ENCODE measurements at regions of chr1 and their contacts with region 1.

Region 1: GRCh38 chr1:234114648-234115307 is 210.3 kb downstream of the SLC35F3 start:
- DNase-seq: peak; percentile 21
- ATAC-seq: peak; percentile 72
- H3K4me3 ChIP-seq: no peak overlapping the region
- H3K27ac ChIP-seq: no peak overlapping the region
- H3K4me1 ChIP-seq: 0 out of 4 replicates have a peak, but pooled peaks cover 0 to 4% of the 10 kb centered on the region in 2 experiments
- H3K27me3 ChIP-seq: no peaks in the 10 kb centered on the region
- CTCF ChIP-seq: peak; percentile 57 to 78 (median 61); a peak in 5 of 6 replicates
- POLR2A ChIP-seq: no peak
- RAD21 ChIP-seq: peak; percentile 76

Region 2: DNA sequence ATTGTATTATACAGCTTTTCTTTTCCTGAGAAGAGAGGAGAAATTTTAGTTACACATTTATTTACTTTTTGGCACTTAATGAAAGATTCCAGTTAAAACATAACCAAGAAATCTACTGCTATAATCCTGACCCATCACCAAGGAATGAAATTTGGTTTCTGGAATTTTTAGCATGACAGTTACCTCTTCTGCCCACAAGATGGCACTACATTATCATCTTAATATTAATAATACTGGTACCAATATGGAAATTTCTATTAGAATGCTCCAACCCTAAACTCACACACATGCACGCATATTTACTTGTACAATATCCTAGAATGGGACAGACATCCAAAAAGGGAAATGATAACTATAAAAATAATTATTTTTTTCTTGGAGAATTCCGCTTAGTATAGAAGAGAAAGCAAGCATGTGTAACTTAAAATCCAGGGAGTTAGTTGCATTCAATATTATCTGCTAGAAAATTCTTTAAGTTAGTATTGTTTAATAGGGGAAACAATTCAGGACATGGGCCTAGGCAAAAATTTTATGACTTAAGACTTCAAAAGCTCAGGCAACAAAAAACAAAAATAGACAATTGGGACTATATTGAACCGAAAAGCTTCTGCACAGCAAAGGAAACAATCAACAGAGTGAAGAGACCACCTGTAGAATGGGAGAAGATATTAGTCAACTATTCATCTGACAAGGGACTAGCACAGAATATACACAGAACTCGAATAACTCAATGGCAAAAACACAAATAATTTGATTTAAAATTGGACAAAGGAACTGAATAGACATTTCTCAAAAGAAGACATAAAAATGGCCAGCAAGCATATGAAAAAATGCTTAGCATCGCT is 749.9 kb before region 1 on chr1:
- CTCF ChIA-PET with region 1: interaction called, 5 read pairs
- POLR2A ChIA-PET with region 1: no interaction called
- RAD21 ChIA-PET with region 1: no interaction called
- intact Hi-C with region 1: loop called (anchors 5 kb)
- DNase-seq: no peak
- ATAC-seq: no peak
- H3K4me3 ChIP-seq: no peak overlapping the region
- H3K27ac ChIP-seq: no peak overlapping the region
- H3K4me1 ChIP-seq: peaks cover 25 to 37% of the 10 kb centered on the region in 2 experiments
- H3K27me3 ChIP-seq: no peaks in the 10 kb centered on the region
- CTCF ChIP-seq: peak; percentile 43 to 72 (median 51); a peak in 5 of 6 replicates
- POLR2A ChIP-seq: no peak
- RAD21 ChIP-seq: peak; percentile 63

Region 3: DNA sequence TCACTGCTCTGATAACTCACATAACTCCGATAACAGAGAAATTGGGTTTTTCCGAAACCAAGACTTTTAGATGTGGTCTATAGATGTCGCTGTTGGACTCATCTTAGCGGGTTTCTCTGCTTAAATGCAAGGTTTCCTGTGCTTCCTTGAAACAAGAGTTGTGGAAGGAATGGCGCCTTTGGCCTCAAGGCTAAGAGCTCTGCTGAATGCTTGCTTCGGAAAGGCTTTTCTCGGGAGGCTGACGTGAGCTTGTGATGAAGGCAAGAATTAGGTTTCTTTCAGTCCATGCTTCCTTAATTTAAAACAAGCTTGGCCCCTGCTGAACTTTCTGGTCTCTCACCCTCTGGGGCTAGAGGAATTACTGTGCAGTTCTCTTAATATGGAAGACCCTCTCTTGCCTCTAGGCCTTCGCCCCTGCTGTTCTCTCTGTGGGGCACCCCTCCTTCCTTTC is 673.8 kb before region 1 on chr1:
- CTCF ChIA-PET with region 1: interaction called, 32 read pairs
- POLR2A ChIA-PET with region 1: no interaction called
- RAD21 ChIA-PET with region 1: no interaction called
- intact Hi-C with region 1: loop called (anchors 2 kb)
- DNase-seq: peak; percentile 71
- ATAC-seq: peak; percentile 83
- H3K4me3 ChIP-seq: no peak overlapping the region
- H3K27ac ChIP-seq: no peak overlapping the region
- H3K4me1 ChIP-seq: peaks cover 0 to 14% of the 10 kb centered on the region in 2 experiments; a peak in 2 of 4 replicates
- H3K27me3 ChIP-seq: no peaks in the 10 kb centered on the region
- CTCF ChIP-seq: peak; percentile 69 to 81 (median 78)
- POLR2A ChIP-seq: no peak
- RAD21 ChIP-seq: peak; percentile 95

Region 4: DNA sequence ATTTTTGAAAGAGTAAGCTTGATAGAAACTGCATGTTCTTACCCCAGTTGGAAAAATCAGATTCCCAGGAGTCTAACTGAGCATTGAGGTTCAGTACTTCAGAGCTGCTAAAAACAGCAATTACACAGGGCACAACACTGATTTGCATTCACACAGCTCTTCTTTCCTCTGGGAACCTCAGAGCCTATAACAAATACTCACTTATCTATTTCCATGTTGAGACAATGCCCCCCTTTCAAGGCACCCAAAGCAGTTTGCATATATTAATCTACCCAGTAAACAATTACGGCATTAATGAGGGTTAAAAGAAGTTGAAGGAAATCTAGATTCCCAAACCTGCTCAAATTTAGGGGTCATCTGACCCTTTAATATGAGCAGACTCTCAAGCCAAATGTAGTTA is 337.2 kb before region 1 on chr1:
- CTCF ChIA-PET with region 1: no interaction called
- POLR2A ChIA-PET with region 1: no interaction called
- RAD21 ChIA-PET with region 1: no interaction called
- intact Hi-C with region 1: no loop called
- DNase-seq: no peak
- ATAC-seq: no peak
- H3K4me3 ChIP-seq: no peak overlapping the region
- H3K27ac ChIP-seq: no peak overlapping the region
- H3K4me1 ChIP-seq: no peaks in the 10 kb centered on the region
- H3K27me3 ChIP-seq: no peaks in the 10 kb centered on the region
- CTCF ChIP-seq: no peak
- POLR2A ChIP-seq: no peak
- RAD21 ChIP-seq: no peak

Region 5: DNA sequence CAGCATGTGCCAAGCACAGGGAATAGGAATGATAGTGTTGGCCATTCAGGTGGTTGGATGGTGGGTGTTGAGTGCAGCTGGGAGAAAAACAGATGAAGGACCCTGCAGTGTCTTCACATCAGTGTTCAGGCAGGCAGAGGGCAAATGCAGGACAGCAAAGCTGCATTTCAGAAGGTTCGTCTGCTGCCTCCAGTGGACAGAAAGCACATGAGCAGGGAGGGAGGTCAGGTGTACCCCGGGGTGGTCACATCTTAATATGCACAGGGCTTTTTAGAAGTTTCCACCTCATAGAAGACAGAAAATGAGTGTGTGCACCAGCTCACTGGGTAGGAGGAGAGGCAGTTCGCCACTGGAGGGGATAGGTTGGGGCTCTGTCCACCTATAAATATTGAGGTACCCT is 25.4 kb before region 1 on chr1:
- CTCF ChIA-PET with region 1: no interaction called
- POLR2A ChIA-PET with region 1: no interaction called
- RAD21 ChIA-PET with region 1: no interaction called
- intact Hi-C with region 1: no loop called
- DNase-seq: no peak
- ATAC-seq: peak; percentile 75
- H3K4me3 ChIP-seq: no peak overlapping the region
- H3K27ac ChIP-seq: no peak overlapping the region
- H3K4me1 ChIP-seq: no peaks in the 10 kb centered on the region
- H3K27me3 ChIP-seq: no peaks in the 10 kb centered on the region
- CTCF ChIP-seq: peak in 2 of 3 experiments; percentile 46 to 48; a peak in 4 of 6 replicates
- POLR2A ChIP-seq: no peak
- RAD21 ChIP-seq: no peak

Region 6: DNA sequence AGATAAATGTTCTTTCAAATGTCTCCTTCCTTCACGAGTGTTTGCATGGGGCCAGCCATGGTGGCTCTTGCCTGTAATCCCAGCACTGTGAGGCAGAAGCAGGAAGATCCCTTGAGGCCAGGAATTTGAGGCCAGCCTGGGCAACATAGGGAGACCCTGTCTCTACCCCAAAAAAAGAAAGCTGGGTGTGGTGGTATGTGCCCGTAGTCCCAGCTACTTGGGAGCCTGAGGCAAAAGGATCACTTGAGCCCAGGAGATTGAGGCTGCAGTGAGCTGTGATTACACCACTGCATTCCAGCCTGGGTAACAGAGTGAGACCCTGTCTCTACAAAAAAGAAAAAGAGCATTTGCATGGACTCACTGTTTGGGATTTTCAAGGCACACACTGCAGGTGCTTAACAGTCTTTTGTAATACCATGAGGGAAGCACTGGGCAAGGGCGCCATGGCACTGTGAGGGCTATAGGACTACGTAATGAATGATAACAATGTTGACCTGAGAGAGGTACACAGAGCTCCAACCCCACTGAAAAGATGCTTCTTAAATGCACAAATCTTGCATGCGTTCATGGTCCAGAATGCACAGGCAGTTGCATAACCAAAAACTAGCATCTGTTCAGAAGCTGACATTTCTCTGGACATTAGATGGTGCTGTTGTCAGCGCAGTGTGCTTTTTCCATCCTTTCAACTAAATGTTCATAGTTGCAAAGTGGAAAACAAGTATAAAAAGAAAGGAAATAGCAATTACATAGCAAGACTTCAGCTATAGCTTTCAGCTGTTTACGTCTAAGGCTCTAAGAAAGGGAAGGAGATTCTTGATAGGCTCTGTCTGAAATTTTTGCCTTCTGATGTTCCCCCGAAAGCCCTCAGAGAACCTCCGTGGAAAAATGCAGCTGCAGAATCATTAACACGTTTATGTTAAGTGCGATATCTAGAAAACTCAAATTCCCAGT is 372.0 kb after region 1 on chr1:
- CTCF ChIA-PET with region 1: interaction called, 3 read pairs
- POLR2A ChIA-PET with region 1: no interaction called
- RAD21 ChIA-PET with region 1: no interaction called
- intact Hi-C with region 1: loop called (anchors 10 kb)
- DNase-seq: no peak
- ATAC-seq: peak; percentile 64; the same call in 1 of the 2 replicates
- H3K4me3 ChIP-seq: no peak overlapping the region
- H3K27ac ChIP-seq: no peak overlapping the region
- H3K4me1 ChIP-seq: no peaks in the 10 kb centered on the region
- H3K27me3 ChIP-seq: peaks cover 10% of the 10 kb centered on the region
- CTCF ChIP-seq: peak; percentile 46 to 64 (median 49); a peak in 4 of 6 replicates
- POLR2A ChIP-seq: no peak
- RAD21 ChIP-seq: peak; percentile 82

Region 7: GRCh38 chr1:235415008-235415904 is 1300.5 kb after region 1 on chr1:
- CTCF ChIA-PET with region 1: no interaction called
- POLR2A ChIA-PET with region 1: no interaction called
- RAD21 ChIA-PET with region 1: no interaction called
- intact Hi-C with region 1: loop called (anchors 10 kb)
- DNase-seq: peak; percentile 59
- ATAC-seq: peak; percentile 83
- H3K4me3 ChIP-seq: no peak overlapping the region
- H3K27ac ChIP-seq: no peak overlapping the region
- H3K4me1 ChIP-seq: peaks cover 5 to 21% of the 10 kb centered on the region in 2 experiments; a peak in 3 of 4 replicates
- H3K27me3 ChIP-seq: no peaks in the 10 kb centered on the region
- CTCF ChIP-seq: peak; percentile 77 to 84 (median 80)
- POLR2A ChIP-seq: no peak
- RAD21 ChIP-seq: peak; percentile 79